PC-9 (cell line): ENCODE measurements at regions of chr5 and their contacts with region 1.

Region 1: GRCh38 chr5:36969700-36970395 is 93.3 kb downstream of the NIPBL start:
- DNase-seq: no peak
- H3K4me3 ChIP-seq: no peak overlapping the region
- H3K27ac ChIP-seq: no peak overlapping the region
- H3K4me1 ChIP-seq: no peaks in the 10 kb centered on the region
- H3K27me3 ChIP-seq: no peaks in the 10 kb centered on the region
- CTCF ChIP-seq: no peak

Region 2: GRCh38 chr5:37015795-37016666 is 46.2 kb after region 1 on chr5:
- CTCF ChIA-PET with region 1: no interaction called
- POLR2A ChIA-PET with region 1: no interaction called
- intact Hi-C with region 1: loop called (anchors 5 kb)
- DNase-seq: no peak
- H3K4me3 ChIP-seq: no peak overlapping the region
- H3K27ac ChIP-seq: no peak overlapping the region
- H3K4me1 ChIP-seq: no peaks in the 10 kb centered on the region
- H3K27me3 ChIP-seq: no peaks in the 10 kb centered on the region
- CTCF ChIP-seq: no peak